Posterior cingulate gyrus (tissue), 11 donors: ENCODE measurements at regions of chr1 and their contacts with region 1.

Region 1: GRCh38 chr1:204162231-204163074 is 3.7 kb downstream of the REN start:
- DNase-seq: peak; percentile 71 to 97 (median 84)

Region 2: GRCh38 chr1:204207136-204207616 is 44.7 kb after region 1 on chr1:
- intact Hi-C with region 1: loop called (anchors 2 kb)
- DNase-seq: peak; percentile 43 to 96 (median 71)

Region 3: GRCh38 chr1:204348722-204349121 is 186.3 kb after region 1 on chr1:
- intact Hi-C with region 1: no loop called
- DNase-seq: peak in 1 of 10 donors; percentile 37

Region 4: GRCh38 chr1:204400882-204401510 is 238.5 kb after region 1 on chr1:
- intact Hi-C with region 1: loop called (anchors 5 kb)
- DNase-seq: no peak

Region 5: DNA sequence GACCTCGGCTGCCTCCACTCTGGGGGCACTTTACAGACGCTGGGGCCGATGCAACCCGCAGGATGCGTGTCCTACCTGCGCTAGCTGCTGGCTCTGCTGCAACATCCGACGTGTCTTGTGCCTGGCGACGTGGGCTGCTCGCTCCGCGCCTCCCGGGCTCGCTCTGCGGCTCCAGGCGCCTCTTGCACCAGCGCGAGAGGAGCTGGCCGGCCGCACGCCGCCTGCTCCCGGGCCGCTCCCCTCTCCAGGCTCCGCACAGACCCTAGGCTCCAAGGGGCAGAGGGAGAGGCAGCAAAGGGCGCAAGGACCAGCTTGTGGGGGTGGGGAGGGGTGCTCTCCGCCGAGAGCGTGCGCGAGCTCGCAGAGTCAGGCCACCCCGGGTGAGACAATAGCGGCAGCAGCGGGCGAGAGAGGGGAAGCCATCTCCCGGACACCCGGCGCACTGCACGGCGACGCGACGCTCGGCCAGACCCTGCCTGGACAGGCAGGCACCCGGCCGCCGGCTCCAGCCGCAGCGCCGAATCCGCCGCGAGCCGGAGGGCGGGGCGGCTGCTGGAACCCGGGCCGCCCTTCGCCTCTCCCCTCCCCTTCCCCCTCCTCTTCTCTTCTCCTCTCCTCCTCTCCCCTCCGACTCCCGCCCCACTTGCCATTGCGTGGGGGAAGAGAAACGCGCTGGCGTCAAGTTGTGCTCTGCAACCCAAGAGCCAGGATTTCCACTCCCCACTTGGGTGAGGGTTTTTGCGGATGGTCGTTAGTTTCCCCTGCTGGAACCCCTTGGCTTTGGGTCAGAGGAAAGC is 332.0 kb after region 1 on chr1 and contains the start of gene PIK3C2B:
- intact Hi-C with region 1: loop called (anchors 10 kb)
- DNase-seq: peak; percentile 75 to 97 (median 82)